ENCODE measurements at regions of chr1 and their contacts with region 1.

Region 1: GRCh38 chr1:220005489-220005888 is 40.8 kb downstream of the EPRS1 start:
- DNase-seq: no peak
- ATAC-seq: no peak
- H3K4me3 ChIP-seq: no peak overlapping the region
- H3K4me3 Mint-ChIP-seq: no peak overlapping the region
- H3K27ac ChIP-seq: no peak overlapping the region
- H3K27ac Mint-ChIP-seq: no peak overlapping the region
- H3K4me1 ChIP-seq: no peaks in the 10 kb centered on the region
- H3K4me1 Mint-ChIP-seq: no peaks in the 10 kb centered on the region
- H3K27me3 ChIP-seq: no peaks in the 10 kb centered on the region
- H3K27me3 Mint-ChIP-seq: no peaks in the 10 kb centered on the region

Region 2: GRCh38 chr1:219993554-219994433 is 11.7 kb before region 1 on chr1:
- CTCF ChIA-PET with region 1: interaction called in 1 of 2 experiments, 11 read pairs
- POLR2A ChIA-PET with region 1: interaction called in 1 of 2 experiments, 8 read pairs
- DNase-seq: no peak
- ATAC-seq: no peak
- H3K4me3 ChIP-seq: no peak overlapping the region
- H3K4me3 Mint-ChIP-seq: no peak overlapping the region
- H3K27ac ChIP-seq: no peak overlapping the region
- H3K27ac Mint-ChIP-seq: no peak overlapping the region
- H3K4me1 ChIP-seq: no peaks in the 10 kb centered on the region
- H3K4me1 Mint-ChIP-seq: peaks cover 0 to 5% (median 2%) of the 10 kb centered on the region in 3 donors
- H3K27me3 ChIP-seq: no peaks in the 10 kb centered on the region
- H3K27me3 Mint-ChIP-seq: no peaks in the 10 kb centered on the region

Region 3: DNA sequence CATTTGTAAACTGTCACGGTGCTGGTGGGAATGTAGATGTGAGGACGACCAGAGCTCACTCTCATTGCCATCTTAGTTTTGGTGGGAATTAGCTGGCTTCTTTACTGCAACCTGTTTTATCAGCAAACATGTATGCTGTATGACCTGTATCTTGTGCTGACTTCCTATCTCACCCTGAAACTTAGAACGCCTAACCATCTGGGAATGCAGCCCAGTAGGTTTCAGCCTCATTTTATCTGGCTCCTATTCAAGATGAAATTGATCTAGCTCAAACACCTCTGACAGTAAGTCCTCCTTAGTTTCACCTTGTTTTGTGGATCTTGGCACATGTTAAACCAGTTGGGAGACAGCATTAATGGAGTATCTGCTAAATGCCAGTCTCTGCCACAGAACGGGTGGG is 1048.4 kb after region 1 on chr1:
- CTCF ChIA-PET with region 1: no interaction called
- POLR2A ChIA-PET with region 1: no interaction called
- DNase-seq: no peak
- ATAC-seq: no peak
- H3K4me3 ChIP-seq: no peak overlapping the region
- H3K4me3 Mint-ChIP-seq: no peak overlapping the region
- H3K27ac ChIP-seq: no peak overlapping the region
- H3K27ac Mint-ChIP-seq: no peak overlapping the region
- H3K4me1 ChIP-seq: no peaks in the 10 kb centered on the region
- H3K4me1 Mint-ChIP-seq: no peaks in the 10 kb centered on the region
- H3K27me3 ChIP-seq: peaks cover 0 to 2% of the 10 kb centered on the region in 2 experiments
- H3K27me3 Mint-ChIP-seq: no peaks in the 10 kb centered on the region

Measured in T-cell (primary cell).